SK-N-SH (cell line): ENCODE measurements at regions of chr16 and their contacts with region 1.

Region 1: DNA sequence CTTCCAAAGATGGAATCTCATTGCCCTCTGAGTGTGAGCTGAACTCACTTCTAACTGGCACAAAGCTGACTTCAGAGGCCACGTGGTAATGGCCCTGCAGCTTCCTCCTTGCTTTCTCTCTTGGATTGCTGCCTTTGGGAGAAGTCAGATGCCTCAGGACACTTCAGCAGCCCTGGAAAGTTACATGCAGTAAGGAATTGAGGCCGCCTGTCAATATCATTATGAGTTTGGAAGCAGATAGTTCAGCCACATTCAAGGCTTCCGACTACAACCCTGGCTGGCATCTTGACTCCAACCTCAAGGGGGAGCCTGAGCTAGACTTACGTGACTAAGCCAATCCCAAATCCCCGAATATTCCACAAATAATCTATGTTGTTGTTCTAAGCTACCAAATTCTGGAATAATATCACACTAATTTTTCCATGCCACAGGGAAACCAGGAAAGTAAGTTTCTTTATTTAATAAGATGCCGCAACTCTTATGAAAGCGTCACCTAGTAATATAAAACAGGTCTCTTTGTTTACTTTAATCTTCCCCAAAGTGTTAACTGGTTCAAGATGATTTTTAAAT is 13.6 kb downstream of the CEP20 start:
- DNase-seq: peak; percentile 60
- H3K4me3 ChIP-seq: no peak overlapping the region
- H3K27ac ChIP-seq: no peak overlapping the region; a peak in 1 of 4 replicates
- H3K4me1 ChIP-seq: peaks cover 0 to 3% of the 10 kb centered on the region in 2 experiments; a peak in 1 of 4 replicates
- H3K27me3 ChIP-seq: no peaks in the 10 kb centered on the region
- CTCF ChIP-seq: peak; percentile 87
- EP300 ChIP-seq: no peak
- RAD21 ChIP-seq: peak; percentile 80

Region 2: GRCh38 chr16:16120382-16121184 is 245.8 kb after region 1 on chr16:
- CTCF ChIA-PET with region 1: interaction called, 19 read pairs
- POLR2A ChIA-PET with region 1: no interaction called
- DNase-seq: peak; percentile 44
- H3K4me3 ChIP-seq: no peak overlapping the region
- H3K27ac ChIP-seq: no peak overlapping the region
- H3K4me1 ChIP-seq: peaks cover 0 to 6% of the 10 kb centered on the region in 2 experiments; a peak in 1 of 4 replicates
- H3K27me3 ChIP-seq: no peaks in the 10 kb centered on the region
- CTCF ChIP-seq: no peak
- EP300 ChIP-seq: no peak
- RAD21 ChIP-seq: no peak

Region 3: GRCh38 chr16:16127469-16128116 is 252.8 kb after region 1 on chr16:
- CTCF ChIA-PET with region 1: interaction called, 37 read pairs
- POLR2A ChIA-PET with region 1: no interaction called
- DNase-seq: peak; percentile 82
- H3K4me3 ChIP-seq: no peak overlapping the region
- H3K27ac ChIP-seq: no peak overlapping the region
- H3K4me1 ChIP-seq: no peaks in the 10 kb centered on the region
- H3K27me3 ChIP-seq: no peaks in the 10 kb centered on the region
- CTCF ChIP-seq: peak; percentile 93
- EP300 ChIP-seq: no peak
- RAD21 ChIP-seq: peak; percentile 92

Region 4: GRCh38 chr16:16133943-16134604 is 259.2 kb after region 1 on chr16:
- CTCF ChIA-PET with region 1: interaction called, 19 read pairs
- POLR2A ChIA-PET with region 1: no interaction called
- DNase-seq: no peak
- H3K4me3 ChIP-seq: no peak overlapping the region
- H3K27ac ChIP-seq: no peak overlapping the region
- H3K4me1 ChIP-seq: peaks cover 0 to 4% of the 10 kb centered on the region in 2 experiments; a peak in 1 of 4 replicates
- H3K27me3 ChIP-seq: no peaks in the 10 kb centered on the region
- CTCF ChIP-seq: no peak
- EP300 ChIP-seq: no peak
- RAD21 ChIP-seq: no peak